ENCODE measurements at regions of chr4 and their contacts with region 1.

Region 1: GRCh38 chr4:17614416-17615299 is at the start of gene MED28:
- DNase-seq: peak; percentile 94 to 97
- H3K4me3 ChIP-seq: peak within 1 kb of the TSS; percentile 88 to 91
- H3K27ac ChIP-seq: peak within 1 kb of the TSS; percentile 87 to 88
- H3K4me1 ChIP-seq: peaks cover 0 to 14% of the 10 kb centered on the region in 2 donors
- H3K27me3 ChIP-seq: no peaks in the 10 kb centered on the region
- CTCF ChIP-seq: peak in 1 of 4 experiments; percentile 25
- POLR2A ChIP-seq: peak; percentile 76 to 86
- total RNA-seq, gene MED28: 22.0 to 64.9 (median 28.7) TPM

Region 2: GRCh38 chr4:17284323-17285175 is 330.1 kb before region 1 on chr4:
- intact Hi-C with region 1: no loop called
- DNase-seq: no peak
- H3K4me3 ChIP-seq: no peak overlapping the region
- H3K27ac ChIP-seq: peak overlapping the region in 1 of 2 donors; percentile 0
- H3K4me1 ChIP-seq: no peaks in the 10 kb centered on the region
- H3K27me3 ChIP-seq: no peaks in the 10 kb centered on the region
- CTCF ChIP-seq: no peak
- POLR2A ChIP-seq: no peak

Region 3: GRCh38 chr4:17576932-17577665 is 37.6 kb before region 1 on chr4 and contains the start of gene LAP3:
- intact Hi-C with region 1: loop called (anchors 5 kb)
- DNase-seq: peak; percentile 98 to 99
- H3K4me3 ChIP-seq: peak within 1 kb of the TSS; percentile 61 to 95
- H3K27ac ChIP-seq: peak within 1 kb of the TSS; percentile 85 to 87
- H3K4me1 ChIP-seq: no peaks in the 10 kb centered on the region
- H3K27me3 ChIP-seq: no peaks in the 10 kb centered on the region
- CTCF ChIP-seq: peak in 1 of 4 experiments; percentile 13
- POLR2A ChIP-seq: peak; percentile 87 to 94
- total RNA-seq, gene LAP3: 10.9 to 87.1 (median 50.8) TPM

Region 4: DNA sequence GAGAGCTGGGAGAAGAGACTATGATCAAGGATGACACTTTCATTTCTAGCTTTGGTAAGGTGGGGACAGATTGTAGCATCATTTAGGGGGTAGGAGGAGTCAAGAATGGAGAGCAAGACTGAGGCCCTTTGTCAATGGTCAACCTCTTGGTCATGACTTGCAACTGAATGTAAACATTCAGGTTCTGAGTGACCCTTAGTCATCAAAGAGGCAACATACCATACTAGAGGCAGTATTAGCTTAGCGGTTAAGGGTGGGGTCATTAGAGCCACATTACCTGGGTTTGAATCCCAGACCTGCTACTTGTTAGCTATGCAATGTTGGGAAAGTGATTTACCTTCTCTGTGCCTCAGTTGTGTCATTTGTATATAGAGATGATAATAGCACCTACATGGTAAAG is 76.2 kb after region 1 on chr4:
- intact Hi-C with region 1: no loop called
- DNase-seq: no peak
- H3K4me3 ChIP-seq: no peak overlapping the region
- H3K27ac ChIP-seq: no peak overlapping the region
- H3K4me1 ChIP-seq: no peaks in the 10 kb centered on the region
- H3K27me3 ChIP-seq: no peaks in the 10 kb centered on the region
- CTCF ChIP-seq: no peak
- POLR2A ChIP-seq: no peak

Measured in uterus (tissue), 4 donors.